Astrocyte of the cerebellum (primary cell): ENCODE measurements at regions of chr14 and their contacts with region 1.

Region 1: DNA sequence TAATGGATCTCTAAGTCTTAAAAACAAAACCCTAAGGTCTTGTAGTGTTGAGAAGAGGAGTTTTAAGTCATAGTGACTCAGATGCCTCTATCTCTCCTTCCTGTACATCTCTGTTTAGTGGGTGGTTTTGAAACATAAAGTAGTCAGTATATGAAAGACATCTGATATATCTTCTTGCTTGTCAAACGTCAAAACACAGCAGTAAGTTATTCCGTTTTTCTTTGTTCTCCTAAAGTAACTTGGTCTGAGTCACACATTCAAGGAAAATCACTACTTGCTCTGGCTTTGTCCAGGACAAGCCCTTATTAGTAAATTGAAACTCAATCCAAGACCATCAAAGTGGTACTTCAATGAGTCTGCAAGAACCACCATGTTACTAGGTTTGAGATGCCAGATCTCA is 1172.5 kb downstream of the BCL11B start:
- DNase-seq: no peak
- H3K4me3 ChIP-seq: no peak overlapping the region
- CTCF ChIP-seq: no peak

Region 2: GRCh38 chr14:98028162-98028561 is 71.4 kb before region 1 on chr14:
- in situ Hi-C with region 1: loop called (anchors 5 kb)
- DNase-seq: peak; percentile 3
- H3K4me3 ChIP-seq: no peak overlapping the region
- CTCF ChIP-seq: no peak

Region 3: GRCh38 chr14:98218218-98218617 is 118.7 kb after region 1 on chr14:
- in situ Hi-C with region 1: no loop called
- DNase-seq: no peak
- H3K4me3 ChIP-seq: no peak overlapping the region
- CTCF ChIP-seq: no peak